ENCODE measurements at regions of chr9 and their contacts with region 1.

Region 1: DNA sequence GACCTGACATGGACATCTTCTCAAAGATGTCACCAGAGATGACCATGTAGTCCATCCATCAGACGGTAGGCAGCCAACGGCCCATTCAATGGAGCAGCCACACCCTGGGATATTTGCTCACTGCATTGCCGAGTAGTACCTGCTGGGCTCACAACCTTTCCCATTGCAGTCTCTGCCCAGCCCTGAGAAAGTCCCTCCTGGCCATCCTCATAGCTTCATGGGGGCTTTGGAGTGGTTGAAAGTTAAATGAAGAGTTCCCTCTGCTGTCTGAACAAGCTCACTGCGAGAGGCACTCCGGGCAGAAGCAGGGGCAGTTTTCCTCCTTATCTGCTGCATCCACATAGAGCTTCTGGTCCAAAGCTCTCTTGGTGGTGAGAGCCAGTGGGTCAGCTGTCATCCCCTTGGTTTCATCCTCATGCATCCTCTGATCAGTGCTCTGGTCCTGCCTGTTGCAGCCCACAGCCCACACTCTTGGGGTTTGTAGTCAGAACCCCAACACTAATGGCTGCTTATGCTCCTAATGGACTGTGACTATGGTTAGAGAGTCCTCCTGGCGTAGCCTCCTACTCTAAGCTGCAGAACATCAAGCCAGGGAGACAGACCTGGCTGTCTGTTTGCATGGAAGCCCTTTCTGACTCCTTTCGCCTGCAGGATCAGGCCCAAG is 23.4 kb downstream of the TNFSF8 start:
- DNase-seq: peak; percentile 57
- ATAC-seq: peak; percentile 11
- H3K4me3 Mint-ChIP-seq: peak overlapping the region; percentile 62
- H3K27ac Mint-ChIP-seq: peak overlapping the region; percentile 90
- H3K4me1 Mint-ChIP-seq: peaks cover 56% of the 10 kb centered on the region
- H3K27me3 Mint-ChIP-seq: no peaks in the 10 kb centered on the region

Region 2: DNA sequence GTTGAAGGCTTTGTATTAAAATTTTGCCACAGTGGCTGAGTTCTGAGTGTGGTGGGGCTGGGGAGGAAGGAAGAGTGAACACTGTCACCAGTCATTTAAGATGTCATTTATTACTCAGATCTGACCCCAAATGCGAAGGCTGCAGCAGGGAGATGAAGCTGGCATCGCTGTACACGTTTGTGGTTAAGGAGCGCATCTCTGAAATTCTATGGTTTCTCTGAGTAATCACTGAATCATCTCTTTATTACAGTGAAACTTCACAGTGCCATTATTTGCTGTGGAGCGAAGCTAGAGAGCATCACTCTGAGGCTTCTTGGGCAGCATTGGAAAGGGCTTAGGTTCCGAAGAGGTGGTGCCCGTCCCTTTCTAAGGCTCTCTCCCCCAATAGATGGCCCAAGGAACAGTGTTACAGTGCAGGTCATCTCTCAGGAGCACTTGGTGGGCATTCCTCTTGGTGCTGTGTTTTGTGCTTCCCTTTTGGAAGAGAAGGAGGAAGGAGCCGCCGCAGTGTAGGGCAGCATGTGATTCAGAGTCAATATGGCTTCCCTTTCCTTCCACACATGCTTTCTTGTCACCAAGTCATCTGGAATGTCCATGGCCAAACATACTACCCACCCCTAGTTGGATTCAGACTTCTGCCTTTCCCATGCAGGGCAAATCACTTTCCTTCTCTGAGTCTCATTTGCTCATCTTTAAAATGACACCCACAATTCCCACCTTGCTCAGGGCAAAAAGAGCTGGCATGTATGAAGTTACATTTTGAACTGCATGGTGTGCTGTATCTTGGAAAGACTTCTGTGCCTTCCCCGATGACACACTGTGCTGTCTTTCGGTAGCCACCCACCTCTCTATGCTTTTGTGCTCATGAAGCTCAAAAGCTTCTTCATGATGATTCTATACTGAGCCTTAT is 215.7 kb before region 1 on chr9:
- CTCF ChIA-PET with region 1: interaction called, 32 read pairs
- POLR2A ChIA-PET with region 1: interaction called, 10 read pairs
- DNase-seq: peak; percentile 91
- ATAC-seq: peak; percentile 93
- H3K4me3 Mint-ChIP-seq: peak overlapping the region; percentile 54
- H3K27ac Mint-ChIP-seq: peak overlapping the region; percentile 93
- H3K4me1 Mint-ChIP-seq: peaks cover 95% of the 10 kb centered on the region
- H3K27me3 Mint-ChIP-seq: no peaks in the 10 kb centered on the region

Region 3: DNA sequence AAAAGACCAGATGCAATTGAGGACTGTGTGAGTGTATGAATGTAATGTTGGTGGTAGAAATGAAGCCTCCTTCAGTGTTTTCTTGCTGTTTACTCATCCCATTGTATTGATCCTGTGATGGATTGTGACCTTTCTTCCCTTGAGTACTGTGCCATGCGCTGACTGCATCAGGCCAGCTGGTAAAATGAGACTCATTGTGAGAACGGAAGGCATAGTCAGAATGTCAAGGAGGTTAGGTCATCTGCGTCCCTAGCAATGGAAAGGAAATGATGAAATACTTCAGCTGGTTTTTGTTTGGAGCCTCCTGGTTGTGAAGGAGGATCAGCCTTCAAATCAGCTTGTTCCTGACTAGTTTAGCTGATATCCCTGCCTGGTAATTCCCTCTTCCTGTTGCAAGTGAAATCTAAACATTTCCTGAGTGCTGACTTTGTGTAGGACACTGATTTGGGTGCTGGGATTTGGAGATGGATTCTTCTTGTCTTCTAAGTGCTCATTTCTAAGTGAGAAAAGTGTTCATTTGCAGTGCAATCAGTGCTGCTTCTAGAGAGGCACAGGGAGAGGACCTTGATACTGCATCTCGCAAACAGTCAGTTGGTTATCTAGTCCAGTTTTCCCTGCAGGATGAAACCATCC is 12.1 kb before region 1 on chr9:
- CTCF ChIA-PET with region 1: interaction called, 27 read pairs
- POLR2A ChIA-PET with region 1: interaction called, 27 read pairs
- DNase-seq: peak; percentile 59
- ATAC-seq: peak; percentile 22
- H3K4me3 Mint-ChIP-seq: no peak overlapping the region
- H3K27ac Mint-ChIP-seq: peak overlapping the region; percentile 79
- H3K4me1 Mint-ChIP-seq: peaks cover 52% of the 10 kb centered on the region
- H3K27me3 Mint-ChIP-seq: no peaks in the 10 kb centered on the region

Region 4: GRCh38 chr9:114919611-114920010 is 12.6 kb after region 1 on chr9:
- CTCF ChIA-PET with region 1: interaction called, 34 read pairs
- POLR2A ChIA-PET with region 1: interaction called, 8 read pairs
- DNase-seq: no peak
- ATAC-seq: no peak
- H3K4me3 Mint-ChIP-seq: no peak overlapping the region
- H3K27ac Mint-ChIP-seq: peak overlapping the region; percentile 35
- H3K4me1 Mint-ChIP-seq: peaks cover 86% of the 10 kb centered on the region
- H3K27me3 Mint-ChIP-seq: no peaks in the 10 kb centered on the region

Region 5: GRCh38 chr9:115008536-115009270 is 101.7 kb after region 1 on chr9:
- CTCF ChIA-PET with region 1: interaction called, 138 read pairs
- POLR2A ChIA-PET with region 1: interaction called, 4 read pairs
- DNase-seq: peak; percentile 34
- ATAC-seq: peak; percentile 49
- H3K4me3 Mint-ChIP-seq: no peak overlapping the region
- H3K27ac Mint-ChIP-seq: no peak overlapping the region
- H3K4me1 Mint-ChIP-seq: peaks cover 61% of the 10 kb centered on the region
- H3K27me3 Mint-ChIP-seq: no peaks in the 10 kb centered on the region

Region 6: DNA sequence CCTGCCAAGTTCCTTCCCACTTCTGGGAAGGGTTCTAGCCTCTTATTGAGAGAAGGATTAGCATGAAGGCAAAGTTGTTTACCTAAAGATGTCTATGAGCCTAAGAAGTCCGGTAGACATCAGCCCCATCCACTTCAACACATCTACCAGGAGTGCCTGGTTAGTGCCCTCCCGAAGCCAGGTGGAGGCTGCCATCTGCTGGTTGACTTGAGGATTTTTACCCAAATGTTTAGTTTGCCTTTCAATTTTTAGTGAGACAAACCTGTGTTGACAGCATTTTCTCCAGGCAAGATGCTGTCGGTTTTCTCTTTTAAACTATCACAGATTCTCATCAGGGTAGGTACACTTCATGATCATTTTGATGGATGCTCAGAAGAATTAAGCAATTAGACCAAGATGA is 107.0 kb after region 1 on chr9:
- CTCF ChIA-PET with region 1: interaction called, 138 read pairs
- POLR2A ChIA-PET with region 1: interaction called, 4 read pairs
- DNase-seq: peak; percentile 89
- ATAC-seq: peak; percentile 93
- H3K4me3 Mint-ChIP-seq: no peak overlapping the region
- H3K27ac Mint-ChIP-seq: peak overlapping the region; percentile 70
- H3K4me1 Mint-ChIP-seq: peaks cover 48% of the 10 kb centered on the region
- H3K27me3 Mint-ChIP-seq: no peaks in the 10 kb centered on the region